A549 (cell line): ENCODE measurements at regions of chr3 and their contacts with region 1.

Region 1: DNA sequence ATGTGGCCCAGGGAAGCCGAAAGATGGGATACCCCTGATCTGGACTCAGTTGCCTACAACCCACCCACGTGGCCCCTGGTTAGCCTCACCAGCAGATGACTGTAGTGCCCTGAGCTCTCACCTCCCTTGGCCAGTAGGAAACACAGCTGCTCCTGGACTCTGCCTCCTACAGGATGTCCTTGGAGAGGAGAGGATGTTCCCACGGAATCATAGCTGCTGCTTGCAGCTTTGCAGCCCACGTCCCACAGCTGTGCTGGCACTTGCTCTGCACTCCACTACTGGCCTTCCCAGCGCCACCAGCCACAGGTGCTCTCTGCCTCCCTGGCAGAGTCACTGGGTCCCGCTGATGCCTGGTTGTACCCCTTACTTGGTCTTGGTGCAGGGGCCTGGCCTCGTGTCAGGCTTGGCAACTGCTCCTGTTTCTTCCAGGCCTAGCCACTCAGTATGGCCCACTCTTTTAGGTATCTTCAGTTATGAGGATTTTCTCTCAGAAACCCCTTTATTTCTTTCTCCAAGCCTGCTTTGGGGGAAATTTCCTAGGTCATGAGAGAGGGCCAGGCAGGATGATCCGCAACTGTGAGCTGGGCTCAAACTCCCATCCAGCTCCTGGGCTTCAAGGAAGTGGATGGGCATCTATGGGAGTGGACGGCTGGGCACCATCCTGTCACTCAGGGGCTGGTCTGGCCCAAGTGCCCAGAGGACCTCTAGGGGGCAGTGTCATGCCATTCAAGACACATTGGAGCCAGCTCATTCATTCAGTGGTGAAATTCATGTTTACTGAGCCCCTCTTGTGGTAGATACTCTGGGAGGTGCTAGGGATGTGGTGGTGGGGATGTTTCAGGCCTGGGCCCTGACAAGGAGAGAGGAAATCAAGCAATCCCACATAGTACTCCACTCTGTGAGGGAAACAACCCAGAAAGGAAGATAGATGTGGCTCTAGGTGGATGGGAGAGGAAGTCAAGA is 16.2 kb upstream of the VILL start:
- DNase-seq: peak; percentile 70 to 80
- ATAC-seq: peak; percentile 96 to 99
- H3K4me3 ChIP-seq: no peak overlapping the region
- H3K27ac ChIP-seq: no peak overlapping the region
- H3K4me1 ChIP-seq: no peaks in the 10 kb centered on the region
- CTCF ChIP-seq: peak; percentile 72
- EP300 ChIP-seq: no peak
- POLR2A ChIP-seq: no peak
- RAD21 ChIP-seq: peak; percentile 71 to 73

Region 2: DNA sequence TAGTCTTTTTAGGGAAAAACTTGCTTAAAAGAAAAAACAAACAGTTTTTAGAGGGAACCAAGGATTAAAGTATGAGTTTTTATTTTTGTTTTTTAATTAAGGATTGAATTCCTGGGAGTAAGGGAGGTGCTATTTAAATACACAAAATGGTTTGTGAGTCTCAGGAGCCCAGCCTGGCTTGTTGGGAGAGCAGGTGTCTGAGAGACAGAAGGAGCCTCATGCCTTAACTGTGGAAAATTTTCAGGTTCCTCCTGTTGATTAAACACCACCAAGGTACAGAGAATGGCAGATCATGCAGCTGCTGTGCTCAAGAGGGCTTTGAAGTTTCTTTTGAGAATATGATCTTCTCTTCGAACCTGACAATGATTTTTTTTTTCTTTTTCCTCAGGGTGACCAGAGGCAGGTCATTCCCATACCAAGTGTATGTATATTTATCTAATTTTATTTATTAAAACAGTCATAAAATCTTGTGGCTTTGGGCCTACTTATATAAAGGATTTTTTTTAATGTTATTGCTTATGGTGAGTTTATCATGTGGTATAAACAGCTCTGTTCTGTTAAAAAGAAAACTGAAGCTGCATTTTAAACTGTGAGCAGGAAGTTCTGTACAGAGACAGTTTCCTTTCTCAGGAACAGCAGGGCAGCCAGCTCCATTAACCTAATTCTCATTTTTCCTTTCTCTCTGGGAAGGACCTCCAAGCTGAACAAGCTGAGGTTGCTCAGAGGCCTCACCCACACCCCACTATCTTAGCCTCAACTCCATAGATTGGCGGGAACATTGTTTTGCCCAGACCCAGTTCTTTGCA is 17.5 kb before region 1 on chr3:
- CTCF ChIA-PET with region 1: interaction called, 14 read pairs
- POLR2A ChIA-PET with region 1: no interaction called
- DNase-seq: no peak
- ATAC-seq: no peak
- H3K4me3 ChIP-seq: no peak overlapping the region
- H3K27ac ChIP-seq: no peak overlapping the region
- H3K4me1 ChIP-seq: 0 out of 3 replicates have a peak, but pooled peaks cover 4% of the 10 kb centered on the region
- CTCF ChIP-seq: no peak
- EP300 ChIP-seq: no peak
- POLR2A ChIP-seq: no peak
- RAD21 ChIP-seq: no peak

Region 3: DNA sequence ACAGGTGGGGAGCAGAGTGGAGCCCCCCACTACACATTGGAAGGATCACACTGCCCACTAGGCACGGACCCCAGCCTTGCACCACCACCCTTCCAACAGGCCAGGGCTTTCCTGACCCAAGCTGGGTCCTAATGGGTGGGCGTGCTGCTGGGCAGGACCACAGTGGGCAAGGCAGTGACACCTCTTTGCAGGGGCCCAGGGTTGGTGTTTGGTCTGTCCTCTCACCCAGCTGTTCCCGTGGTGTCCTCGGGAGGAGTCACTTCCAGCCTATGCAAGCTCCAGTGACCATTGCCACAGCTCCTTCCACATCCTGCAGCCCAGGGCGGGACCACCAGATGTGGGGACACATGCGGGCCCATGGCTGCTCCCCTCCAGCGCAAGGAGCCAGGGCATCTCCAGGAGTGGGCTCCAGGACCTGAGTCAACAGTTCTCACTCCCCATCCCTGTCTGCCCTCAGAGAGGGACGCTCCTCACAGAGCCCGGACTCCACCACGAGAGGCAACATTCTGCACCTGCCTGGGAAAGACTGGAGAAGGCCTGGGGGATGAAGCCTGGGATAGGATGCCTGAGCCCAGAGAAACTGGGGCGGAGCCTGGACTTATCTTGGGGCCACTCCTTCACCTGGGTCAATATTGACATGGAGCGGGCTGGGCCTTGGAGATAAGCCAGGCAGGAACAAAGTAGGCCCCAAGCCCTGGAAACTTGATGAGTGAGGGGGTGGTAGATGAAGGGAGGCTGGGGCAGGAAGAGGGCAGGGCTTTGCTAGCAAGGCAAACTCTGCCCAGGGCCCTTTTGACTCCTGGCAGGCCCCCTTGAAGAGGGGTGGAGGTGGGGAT is 12.3 kb after region 1 on chr3:
- CTCF ChIA-PET with region 1: interaction called, 34 read pairs
- POLR2A ChIA-PET with region 1: no interaction called
- DNase-seq: peak in 1 of 2 experiments; percentile 65
- ATAC-seq: peak in 1 of 2 experiments; percentile 61; a peak in 3 of 6 replicates
- H3K4me3 ChIP-seq: no peak overlapping the region
- H3K27ac ChIP-seq: peak overlapping the region; percentile 53 to 64; a peak in 5 of 6 replicates
- H3K4me1 ChIP-seq: peaks cover 14% of the 10 kb centered on the region
- CTCF ChIP-seq: no peak
- EP300 ChIP-seq: no peak
- POLR2A ChIP-seq: no peak
- RAD21 ChIP-seq: no peak

Region 4: DNA sequence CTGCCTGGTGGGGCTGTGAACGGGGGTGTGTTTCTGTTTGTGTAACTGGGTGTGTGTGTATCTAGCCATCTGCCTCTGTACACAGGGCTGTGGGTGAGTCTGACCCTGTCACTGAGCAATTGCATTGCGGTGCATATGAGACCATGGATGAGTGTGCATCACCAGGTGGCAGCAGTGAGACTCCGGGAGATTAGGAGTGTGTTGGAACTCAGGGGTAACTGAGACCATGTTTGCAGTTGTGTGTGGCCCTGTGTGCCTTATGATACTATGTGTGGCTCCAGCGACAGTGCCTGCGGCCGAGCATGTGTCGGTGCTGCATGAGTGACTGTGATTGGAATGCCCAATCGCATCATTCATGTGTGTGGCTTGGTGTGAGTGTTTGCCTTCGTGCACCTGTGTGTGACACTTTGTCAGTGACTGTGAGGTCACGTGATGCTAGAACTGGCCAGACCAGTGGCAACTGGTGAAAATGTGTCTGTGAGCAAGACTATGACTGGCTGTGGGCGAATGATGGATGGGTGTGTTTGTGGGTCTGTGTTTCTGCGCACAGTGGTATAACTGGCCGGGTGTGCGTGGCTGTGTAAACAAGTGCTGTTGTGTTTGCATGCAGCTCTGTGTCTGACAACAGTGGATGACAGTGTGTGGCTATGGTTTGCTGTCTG is 30.1 kb after region 1 on chr3:
- CTCF ChIA-PET with region 1: interaction called, 30 read pairs
- POLR2A ChIA-PET with region 1: no interaction called
- DNase-seq: peak; percentile 55 to 76
- ATAC-seq: peak; percentile 75 to 88
- H3K4me3 ChIP-seq: no peak overlapping the region
- H3K27ac ChIP-seq: no peak overlapping the region
- H3K4me1 ChIP-seq: peaks cover 4% of the 10 kb centered on the region; the same call in 1 of the 3 replicates
- CTCF ChIP-seq: peak; percentile 72
- EP300 ChIP-seq: no peak
- POLR2A ChIP-seq: no peak
- RAD21 ChIP-seq: peak; percentile 51 to 62

Region 5: GRCh38 chr3:38070013-38070412 is 95.6 kb after region 1 on chr3:
- CTCF ChIA-PET with region 1: no interaction called
- POLR2A ChIA-PET with region 1: no interaction called
- DNase-seq: no peak
- ATAC-seq: no peak
- H3K4me3 ChIP-seq: no peak overlapping the region
- H3K27ac ChIP-seq: no peak overlapping the region
- H3K4me1 ChIP-seq: no peaks in the 10 kb centered on the region
- CTCF ChIP-seq: no peak
- EP300 ChIP-seq: no peak
- POLR2A ChIP-seq: no peak
- RAD21 ChIP-seq: no peak

Region 6: GRCh38 chr3:38268526-38268925 is 294.1 kb after region 1 on chr3:
- CTCF ChIA-PET with region 1: no interaction called
- POLR2A ChIA-PET with region 1: no interaction called
- DNase-seq: no peak
- ATAC-seq: no peak
- H3K4me3 ChIP-seq: no peak overlapping the region
- H3K27ac ChIP-seq: no peak overlapping the region
- H3K4me1 ChIP-seq: no peaks in the 10 kb centered on the region
- CTCF ChIP-seq: no peak
- EP300 ChIP-seq: no peak
- POLR2A ChIP-seq: no peak
- RAD21 ChIP-seq: no peak

Region 7: GRCh38 chr3:38297947-38298711 is 323.7 kb after region 1 on chr3:
- CTCF ChIA-PET with region 1: interaction called, 11 read pairs
- POLR2A ChIA-PET with region 1: no interaction called
- DNase-seq: peak; percentile 24 to 28
- ATAC-seq: peak; percentile 84 to 97
- H3K4me3 ChIP-seq: no peak overlapping the region
- H3K27ac ChIP-seq: no peak overlapping the region
- H3K4me1 ChIP-seq: no peaks in the 10 kb centered on the region
- CTCF ChIP-seq: peak; percentile 63
- EP300 ChIP-seq: no peak
- POLR2A ChIP-seq: no peak
- RAD21 ChIP-seq: peak in 1 of 2 experiments; percentile 20; a peak in 2 of 5 replicates

Region 8: GRCh38 chr3:38479431-38480092 is 505.2 kb after region 1 on chr3:
- CTCF ChIA-PET with region 1: interaction called, 13 read pairs
- POLR2A ChIA-PET with region 1: no interaction called
- DNase-seq: peak; percentile 66 to 79
- ATAC-seq: peak; percentile 87 to 96
- H3K4me3 ChIP-seq: no peak overlapping the region
- H3K27ac ChIP-seq: no peak overlapping the region
- H3K4me1 ChIP-seq: no peaks in the 10 kb centered on the region
- CTCF ChIP-seq: peak; percentile 87
- EP300 ChIP-seq: no peak
- POLR2A ChIP-seq: no peak
- RAD21 ChIP-seq: peak; percentile 90 to 91